ENCODE measurements at regions of chr15 and their contacts with region 1.

Region 1: DNA sequence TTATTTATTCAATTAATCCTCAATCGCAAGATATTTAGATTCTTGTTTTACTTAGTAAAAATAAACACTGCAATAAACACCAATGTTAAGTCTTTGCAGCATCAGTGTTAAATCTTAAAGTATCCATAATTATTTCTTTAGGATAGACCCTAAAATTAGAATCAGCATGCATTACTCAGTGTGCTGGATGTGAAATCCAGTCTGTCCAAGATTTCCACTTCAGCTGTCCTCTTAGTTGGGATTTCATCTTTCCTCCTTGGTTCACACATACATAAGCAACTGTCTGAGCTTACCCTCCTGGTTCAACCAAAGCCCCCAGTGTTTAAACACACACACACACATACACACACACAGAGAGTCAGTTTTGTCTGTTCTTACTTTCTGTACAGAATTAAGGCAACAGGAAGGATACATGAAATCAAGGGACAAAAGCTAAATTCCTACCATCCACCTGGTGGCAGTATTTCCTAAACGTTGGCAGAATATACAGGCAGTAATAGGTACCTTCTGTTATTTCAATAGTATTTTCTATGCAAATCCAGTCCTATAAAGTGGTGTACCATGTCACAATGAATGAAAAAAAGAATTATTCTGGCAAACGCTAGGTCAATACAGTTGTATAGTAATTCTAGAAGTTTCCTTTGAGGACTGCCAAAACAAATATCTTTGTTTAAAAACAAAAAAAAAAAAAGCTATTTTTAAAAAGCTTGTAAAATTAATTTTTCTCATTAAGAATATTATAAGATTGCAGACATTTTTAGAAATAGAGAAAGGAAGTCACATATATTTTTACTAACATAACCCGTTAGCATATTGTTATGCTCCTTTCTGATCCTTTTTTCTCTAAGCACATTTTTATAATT is 27.3 kb upstream of the DMXL2 start:
- DNase-seq: no peak
- ATAC-seq: peak; percentile 87

Region 2: GRCh38 chr15:51450001-51450400 is 199.9 kb before region 1 on chr15:
- intact Hi-C with region 1: no loop called
- DNase-seq: no peak
- ATAC-seq: no peak

Region 3: GRCh38 chr15:51776952-51777574 is 127.2 kb after region 1 on chr15:
- intact Hi-C with region 1: loop called (anchors 1 to 10 kb)
- DNase-seq: peak; percentile 34 to 65
- ATAC-seq: peak; percentile 94

Measured in left colon (tissue), 2 donors.